Right ventricle myocardium inferior (tissue), 1 donor: ENCODE measurements at regions of chr14 and their contacts with region 1.

Region 1: GRCh38 chr14:54893151-54893760 is 9.4 kb downstream of the GCH1 start:
- DNase-seq: no peak
- ATAC-seq: no peak

Region 2: GRCh38 chr14:54805521-54806322 is 87.5 kb before region 1 on chr14:
- intact Hi-C with region 1: loop called (anchors 10 kb)
- DNase-seq: peak; percentile 89
- ATAC-seq: peak; percentile 92